PC-3 (cell line): ENCODE measurements at regions of chr16 and their contacts with region 1.

Region 1: GRCh38 chr16:3106205-3106928 is 6.0 kb upstream of the ZNF205 start:
- DNase-seq: peak; percentile 81
- ATAC-seq: peak; percentile 97
- H3K4me3 ChIP-seq: peak overlapping the region; percentile 84
- H3K27ac ChIP-seq: no peak overlapping the region
- H3K4me1 ChIP-seq: peaks cover 3% of the 10 kb centered on the region; the same call in 1 of the 2 replicates
- H3K27me3 ChIP-seq: no peaks in the 10 kb centered on the region
- CTCF ChIP-seq: no peak

Region 2: GRCh38 chr16:2082160-2082982 is 1024.0 kb before region 1 on chr16:
- CTCF ChIA-PET with region 1: no interaction called
- POLR2A ChIA-PET with region 1: no interaction called
- intact Hi-C with region 1: no loop called
- DNase-seq: no peak
- ATAC-seq: no peak
- H3K4me3 ChIP-seq: no peak overlapping the region
- H3K27ac ChIP-seq: no peak overlapping the region
- H3K4me1 ChIP-seq: no peaks in the 10 kb centered on the region
- H3K27me3 ChIP-seq: no peaks in the 10 kb centered on the region
- CTCF ChIP-seq: no peak

Region 3: DNA sequence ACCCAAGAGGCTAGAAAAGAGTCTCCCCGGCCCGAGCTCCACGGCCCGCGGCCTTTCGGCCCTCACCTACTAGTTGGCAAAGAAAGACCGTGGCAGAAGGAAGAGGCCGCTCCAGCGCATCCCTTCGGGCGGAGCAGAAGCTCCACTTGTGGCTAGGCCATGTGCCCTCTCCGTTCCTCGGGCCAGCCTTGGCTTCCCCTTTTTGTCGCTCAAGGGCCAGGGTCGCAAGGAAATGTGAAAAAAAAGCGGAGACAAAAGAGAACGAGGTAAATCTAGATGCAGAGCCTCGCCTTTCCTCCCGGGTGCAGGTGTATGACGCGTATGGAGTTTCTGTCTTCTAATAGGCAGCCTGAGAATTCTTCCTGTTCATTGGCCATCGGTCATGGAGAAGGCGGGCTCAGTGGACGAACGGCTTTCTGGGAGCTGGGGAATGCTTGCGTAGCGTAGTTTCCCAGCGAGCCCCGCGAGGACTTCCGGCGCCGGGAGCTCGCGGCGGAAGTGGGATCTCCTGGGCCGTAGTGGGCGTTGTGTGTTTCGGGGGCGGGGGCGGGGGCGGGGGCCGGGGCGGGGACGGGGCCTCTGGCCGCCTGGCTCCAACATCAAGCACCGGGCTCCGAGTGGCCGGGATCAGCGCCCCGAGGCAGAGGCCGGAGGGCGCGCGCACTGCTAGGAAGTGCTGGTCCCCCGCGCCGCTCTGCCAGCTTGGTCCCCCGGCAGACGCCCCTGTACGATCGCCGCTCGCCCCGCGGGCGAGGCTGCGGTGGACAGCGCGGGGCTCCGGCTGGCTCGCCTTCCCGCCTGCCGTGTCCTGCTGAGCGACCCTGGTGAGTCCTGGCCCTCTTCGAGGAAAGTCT is 28.4 kb after region 1 on chr16 and contains the start of gene ZNF213:
- CTCF ChIA-PET with region 1: no interaction called
- POLR2A ChIA-PET with region 1: no interaction called
- intact Hi-C with region 1: no loop called
- DNase-seq: peak; percentile 95
- ATAC-seq: peak; percentile 94
- H3K4me3 ChIP-seq: peak within 1 kb of the TSS; percentile 99
- H3K27ac ChIP-seq: peak within 1 kb of the TSS; percentile 67
- H3K4me1 ChIP-seq: peaks cover 6% of the 10 kb centered on the region; the same call in 1 of the 2 replicates
- H3K27me3 ChIP-seq: no peaks in the 10 kb centered on the region
- CTCF ChIP-seq: no peak
- total RNA-seq, gene ZNF213: 3.6 and 9.6 TPM in 2 replicates

Region 4: GRCh38 chr16:3234543-3235541 is 128.5 kb after region 1 on chr16 and contains the start of gene ZNF200:
- CTCF ChIA-PET with region 1: no interaction called
- POLR2A ChIA-PET with region 1: interaction called, 15 read pairs
- intact Hi-C with region 1: no loop called
- DNase-seq: peak; percentile 90
- ATAC-seq: peak; percentile 98
- H3K4me3 ChIP-seq: peak within 1 kb of the TSS; percentile 90
- H3K27ac ChIP-seq: peak within 1 kb of the TSS; percentile 78
- H3K4me1 ChIP-seq: peaks cover 8% of the 10 kb centered on the region; the same call in 1 of the 2 replicates
- H3K27me3 ChIP-seq: no peaks in the 10 kb centered on the region
- CTCF ChIP-seq: no peak
- total RNA-seq, gene ZNF200: 4.7 and 5.0 TPM in 2 replicates

Region 5: GRCh38 chr16:4944333-4945281 is 1838.2 kb after region 1 on chr16:
- CTCF ChIA-PET with region 1: no interaction called
- POLR2A ChIA-PET with region 1: interaction called, 16 read pairs
- intact Hi-C with region 1: no loop called
- DNase-seq: peak; percentile 93
- ATAC-seq: peak; percentile 67
- H3K4me3 ChIP-seq: peak overlapping the region; percentile 38; the same call in 1 of the 2 replicates
- H3K27ac ChIP-seq: peak overlapping the region; percentile 92
- H3K4me1 ChIP-seq: peaks cover 37% of the 10 kb centered on the region
- H3K27me3 ChIP-seq: no peaks in the 10 kb centered on the region
- CTCF ChIP-seq: no peak